Posterior cingulate gyrus (tissue), 11 donors: ENCODE measurements at regions of chr4 and their contacts with region 1.

Region 1: DNA sequence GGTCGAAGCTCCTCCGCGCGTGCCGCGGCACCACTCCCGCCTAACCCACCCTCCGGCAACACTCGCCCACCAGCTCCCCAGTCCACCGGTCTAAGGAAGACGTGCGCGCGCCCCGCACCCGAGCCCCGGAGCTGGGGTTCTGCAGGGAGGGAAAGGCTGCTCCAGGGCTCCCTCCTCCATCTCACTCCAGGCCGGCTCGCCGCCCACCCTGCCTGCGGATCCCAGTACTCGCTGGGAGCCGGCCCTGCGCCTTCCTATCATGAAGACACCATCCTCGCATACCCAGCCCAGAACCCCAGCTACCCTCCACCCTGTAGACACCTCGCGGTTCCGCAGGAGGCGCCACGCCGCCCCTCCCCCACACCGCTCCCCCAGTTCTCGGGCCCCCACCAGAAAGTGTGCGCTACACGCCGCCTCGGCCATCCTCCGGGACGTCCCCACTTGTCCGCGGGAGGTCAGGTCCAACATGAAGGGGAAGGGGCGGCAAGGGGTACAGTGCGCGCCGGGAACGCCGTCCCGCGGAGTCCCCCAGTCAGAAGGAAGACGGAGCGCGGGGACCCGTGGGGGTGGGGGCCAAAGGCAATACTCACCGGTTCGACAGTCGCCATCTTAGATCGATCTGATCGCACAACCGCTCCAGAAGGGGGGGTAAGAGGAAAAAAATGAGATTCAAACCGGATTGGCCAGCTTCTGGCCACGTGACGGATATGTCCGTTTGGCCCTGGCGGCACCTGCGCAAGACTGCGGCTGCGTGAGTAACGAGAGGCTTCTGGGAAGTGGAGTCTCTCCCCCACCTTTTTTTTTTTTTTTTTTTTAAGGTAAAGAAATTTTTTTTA is at the start of gene EIF4E:
- DNase-seq: peak; percentile 92 to 99 (median 94)

Region 2: GRCh38 chr4:98260579-98261290 is 668.0 kb before region 1 on chr4:
- intact Hi-C with region 1: loop called (anchors 5 kb)
- DNase-seq: peak; percentile 91 to 99 (median 93)

Region 3: GRCh38 chr4:98467627-98468072 is 461.1 kb before region 1 on chr4:
- intact Hi-C with region 1: loop called (anchors 5 kb)
- DNase-seq: peak; percentile 56 to 96 (median 78)

Region 4: GRCh38 chr4:98658287-98659105 is 270.2 kb before region 1 on chr4 and contains the start of gene TSPAN5:
- intact Hi-C with region 1: loop called (anchors 5 kb)
- DNase-seq: peak; percentile 70 to 97 (median 81)

Region 5: GRCh38 chr4:98995183-98996055 is 66.7 kb after region 1 on chr4 and contains the start of gene METAP1:
- intact Hi-C with region 1: loop called (anchors 1 kb)
- DNase-seq: peak; percentile 78 to 99 (median 90)

Region 6: GRCh38 chr4:99054428-99054994 is 125.8 kb after region 1 on chr4:
- intact Hi-C with region 1: loop called (anchors 10 kb)
- DNase-seq: no peak

Region 7: DNA sequence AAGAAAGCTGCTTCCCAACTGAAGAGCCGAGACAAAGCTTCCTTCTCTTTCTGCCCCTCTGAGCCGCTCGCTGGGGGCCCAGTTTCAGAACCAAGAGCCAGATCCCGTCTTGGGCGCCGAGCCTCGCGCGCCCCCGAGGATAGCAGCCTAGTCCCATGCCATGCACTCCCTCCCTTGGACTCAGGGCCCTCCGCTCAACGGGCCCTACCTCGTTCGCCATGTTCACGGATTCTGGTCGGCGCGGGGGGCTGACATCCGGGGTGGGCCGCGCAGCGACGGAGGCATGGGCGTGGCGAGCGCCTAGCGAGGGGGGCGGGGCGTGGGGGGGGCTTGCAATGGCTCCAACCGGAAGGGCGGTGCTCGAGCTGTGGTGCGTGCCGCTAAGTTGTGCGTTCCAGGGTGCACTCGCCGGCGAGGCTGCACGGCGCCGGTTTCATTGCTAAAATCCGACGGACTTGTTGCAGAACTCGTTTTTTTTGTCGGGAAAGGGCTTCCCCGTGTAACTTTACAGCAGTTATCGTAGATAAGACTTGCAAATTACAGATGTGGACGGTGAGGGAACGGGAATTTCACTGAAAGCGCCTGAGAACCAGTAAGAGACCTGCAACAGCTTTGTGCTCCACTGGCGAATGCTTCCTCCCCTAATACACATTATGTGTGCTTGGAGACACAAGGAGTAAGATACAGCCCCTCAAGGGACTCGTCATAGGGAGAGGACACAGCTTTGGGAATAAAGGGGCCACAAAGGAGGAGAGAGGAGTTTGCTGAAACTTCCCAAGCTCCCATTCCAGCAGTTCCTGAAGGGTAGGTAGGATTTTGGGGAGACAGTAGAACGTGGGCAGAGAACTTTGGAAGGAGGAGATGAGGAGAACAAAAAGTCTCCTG is 160.0 kb after region 1 on chr4 and contains the start of gene ADH5:
- intact Hi-C with region 1: loop called (anchors 1 kb)
- DNase-seq: peak; percentile 67 to 96 (median 76)